ENCODE measurements at regions of chr1 and their contacts with region 1.

Region 1: GRCh38 chr1:32107742-32108661 is at the start of gene KPNA6:
- DNase-seq: peak; percentile 75 to 95 (median 93)
- ATAC-seq: peak; percentile 94
- H3K4me3 ChIP-seq: peak within 1 kb of the TSS; percentile 75
- H3K4me3 Mint-ChIP-seq: peak within 1 kb of the TSS; percentile 95 to 100 (median 99)
- H3K27ac ChIP-seq: peak within 1 kb of the TSS; percentile 94
- H3K27ac Mint-ChIP-seq: peak within 1 kb of the TSS; percentile 93 to 99 (median 98)
- H3K4me1 ChIP-seq: peaks cover 37 to 40% of the 10 kb centered on the region in 2 donors
- H3K4me1 Mint-ChIP-seq: peaks cover 27 to 63% (median 47%) of the 10 kb centered on the region in 7 donors
- H3K27me3 ChIP-seq: no peaks in the 10 kb centered on the region
- H3K27me3 Mint-ChIP-seq: no peaks in the 10 kb centered on the region
- total RNA-seq, gene KPNA6: 47.4 to 63.7 (median 51.6) TPM

Region 2: DNA sequence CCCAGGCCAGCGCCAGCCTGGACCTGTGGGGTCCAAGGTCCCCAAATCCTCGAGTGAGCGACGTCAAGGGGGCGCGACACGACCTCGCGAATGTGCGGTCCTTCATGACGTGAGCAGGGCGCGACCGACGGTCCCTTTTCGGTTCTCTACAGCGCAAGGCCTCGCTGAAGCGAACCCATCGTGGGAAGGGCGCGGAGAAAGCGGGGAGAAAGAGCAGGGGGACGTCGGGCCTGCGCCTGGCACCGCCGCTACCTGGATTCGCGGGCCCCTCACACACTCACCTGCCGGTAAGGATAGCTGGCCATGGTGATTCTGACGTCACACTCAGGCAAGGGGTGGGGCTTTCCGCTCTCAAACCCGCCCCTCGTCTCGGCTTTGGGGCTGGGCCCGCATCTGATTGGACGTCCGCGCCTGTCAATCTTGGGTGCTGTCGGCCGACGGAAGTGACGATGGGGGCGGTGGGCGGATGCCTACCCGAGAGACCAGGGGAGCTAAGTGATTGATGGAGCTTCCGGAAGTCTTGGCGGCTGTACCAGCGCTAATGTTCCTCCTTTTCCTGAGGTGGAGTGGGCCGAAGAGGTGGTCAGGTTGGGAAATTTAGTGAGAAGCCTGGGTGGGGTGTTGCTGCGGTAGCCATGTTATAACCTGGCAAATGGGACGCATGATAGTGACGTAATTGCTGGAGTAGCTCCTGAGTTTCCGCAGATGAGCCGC is 463.3 kb before region 1 on chr1 and contains the start of gene PEF1:
- CTCF ChIA-PET with region 1: no interaction called
- POLR2A ChIA-PET with region 1: interaction called, 5 read pairs
- intact Hi-C with region 1: loop called in 1 of 2 experiments (anchors 5 kb)
- DNase-seq: peak; percentile 97 to 100 (median 99)
- ATAC-seq: peak; percentile 94
- H3K4me3 ChIP-seq: peak within 1 kb of the TSS; percentile 91
- H3K4me3 Mint-ChIP-seq: peak within 1 kb of the TSS; percentile 92 to 100 (median 98)
- H3K27ac ChIP-seq: peak within 1 kb of the TSS; percentile 98
- H3K27ac Mint-ChIP-seq: peak within 1 kb of the TSS; percentile 98 to 100 (median 99)
- H3K4me1 ChIP-seq: peaks cover 27 to 30% of the 10 kb centered on the region in 2 donors
- H3K4me1 Mint-ChIP-seq: peaks cover 18 to 47% (median 40%) of the 10 kb centered on the region in 7 donors
- H3K27me3 ChIP-seq: no peaks in the 10 kb centered on the region
- H3K27me3 Mint-ChIP-seq: no peaks in the 10 kb centered on the region
- total RNA-seq, gene PEF1: 37.7 to 49.8 (median 40.8) TPM

Region 3: GRCh38 chr1:31705080-31705866 is 402.7 kb before region 1 on chr1:
- CTCF ChIA-PET with region 1: no interaction called
- POLR2A ChIA-PET with region 1: no interaction called
- intact Hi-C with region 1: no loop called
- DNase-seq: peak in 3 of 9 donors; percentile 13 to 80 (median 21)
- ATAC-seq: peak; percentile 70
- H3K4me3 ChIP-seq: no peak overlapping the region
- H3K4me3 Mint-ChIP-seq: peak overlapping the region in 6 of 10 donors; percentile 30 to 69 (median 57)
- H3K27ac ChIP-seq: no peak overlapping the region
- H3K27ac Mint-ChIP-seq: peak overlapping the region in 2 of 9 donors; percentile 58 to 67
- H3K4me1 ChIP-seq: peaks cover 8 to 12% of the 10 kb centered on the region in 2 donors
- H3K4me1 Mint-ChIP-seq: peaks cover 14 to 42% (median 28%) of the 10 kb centered on the region in 7 donors
- H3K27me3 ChIP-seq: peaks cover 0 to 12% of the 10 kb centered on the region in 2 donors
- H3K27me3 Mint-ChIP-seq: peaks cover 42 to 62% (median 45%) of the 10 kb centered on the region in 5 donors

Region 4: GRCh38 chr1:32122151-32122550 is 14.1 kb after region 1 on chr1:
- CTCF ChIA-PET with region 1: interaction called, 3 read pairs
- POLR2A ChIA-PET with region 1: interaction called, 13 read pairs
- intact Hi-C with region 1: loop called in 1 of 2 experiments (anchors 1 kb)
- DNase-seq: peak in 3 of 9 donors; percentile 18 to 41 (median 25)
- ATAC-seq: no peak
- H3K4me3 ChIP-seq: no peak overlapping the region
- H3K4me3 Mint-ChIP-seq: peak overlapping the region; percentile 16 to 86 (median 62)
- H3K27ac ChIP-seq: no peak overlapping the region
- H3K27ac Mint-ChIP-seq: peak overlapping the region; percentile 15 to 91 (median 81)
- H3K4me1 ChIP-seq: peaks cover 18 to 20% of the 10 kb centered on the region in 2 donors
- H3K4me1 Mint-ChIP-seq: peaks cover 28 to 71% (median 56%) of the 10 kb centered on the region in 7 donors
- H3K27me3 ChIP-seq: no peaks in the 10 kb centered on the region
- H3K27me3 Mint-ChIP-seq: no peaks in the 10 kb centered on the region

Region 5: DNA sequence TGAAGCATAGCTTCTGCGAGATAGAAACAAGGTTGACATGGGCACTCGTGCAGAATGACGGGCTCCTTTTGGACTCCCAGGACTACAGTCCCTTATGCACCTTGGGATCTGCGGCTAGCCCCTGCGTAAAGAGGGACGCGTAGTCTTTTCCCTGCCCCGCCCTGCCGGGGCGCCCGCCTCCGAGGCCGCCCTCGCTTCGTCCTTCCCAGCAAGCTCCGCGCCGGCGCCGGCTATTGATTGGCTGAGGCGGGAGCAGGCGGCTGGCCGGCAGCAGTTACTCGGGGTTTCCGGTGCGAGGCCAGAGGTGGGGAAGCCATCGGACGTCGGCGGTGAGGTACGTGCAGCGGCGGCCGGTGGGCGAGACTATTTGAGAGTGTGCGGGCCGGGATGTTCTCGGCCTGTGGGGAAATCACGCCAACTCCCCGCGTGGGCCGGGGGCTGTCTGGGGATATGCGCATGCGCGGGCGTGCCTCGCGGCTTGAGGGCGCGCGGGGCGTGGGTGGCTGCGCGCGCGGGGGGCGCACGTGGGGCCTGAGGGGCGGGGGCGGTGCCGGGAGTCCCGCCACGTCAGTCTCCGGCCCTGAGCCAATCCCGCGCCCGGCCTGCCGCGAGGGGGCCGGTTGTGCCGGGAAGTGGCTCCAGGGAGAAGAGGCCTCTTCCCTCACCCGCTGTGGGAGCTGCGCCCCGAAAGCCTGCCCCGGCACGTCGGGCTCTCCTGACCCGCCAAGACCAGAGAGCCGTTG is 71.6 kb after region 1 on chr1 and contains the start of gene TXLNA:
- CTCF ChIA-PET with region 1: no interaction called
- POLR2A ChIA-PET with region 1: interaction called, 7 read pairs
- intact Hi-C with region 1: loop called (anchors 1 to 5 kb)
- DNase-seq: peak; percentile 80 to 93 (median 86)
- ATAC-seq: peak; percentile 91
- H3K4me3 ChIP-seq: peak within 1 kb of the TSS; percentile 89
- H3K4me3 Mint-ChIP-seq: peak within 1 kb of the TSS; percentile 86 to 94 (median 91)
- H3K27ac ChIP-seq: peak within 1 kb of the TSS; percentile 89
- H3K27ac Mint-ChIP-seq: peak within 1 kb of the TSS; percentile 84 to 98 (median 92)
- H3K4me1 ChIP-seq: peaks cover 17 to 21% of the 10 kb centered on the region in 2 donors
- H3K4me1 Mint-ChIP-seq: peaks cover 22 to 45% (median 38%) of the 10 kb centered on the region in 7 donors
- H3K27me3 ChIP-seq: no peaks in the 10 kb centered on the region
- H3K27me3 Mint-ChIP-seq: no peaks in the 10 kb centered on the region
- total RNA-seq, gene TXLNA: 16.7 to 83.3 (median 36.3) TPM

Region 6: GRCh38 chr1:32200226-32201010 is 92.4 kb after region 1 on chr1 and contains the start of gene CCDC28B:
- CTCF ChIA-PET with region 1: no interaction called
- POLR2A ChIA-PET with region 1: interaction called, 5 read pairs
- intact Hi-C with region 1: loop called (anchors 1 kb)
- DNase-seq: peak; percentile 35 to 71 (median 62)
- ATAC-seq: peak; percentile 59
- H3K4me3 ChIP-seq: peak within 1 kb of the TSS; percentile 96
- H3K4me3 Mint-ChIP-seq: peak within 1 kb of the TSS; percentile 78 to 99 (median 94)
- H3K27ac ChIP-seq: peak within 1 kb of the TSS; percentile 99
- H3K27ac Mint-ChIP-seq: peak within 1 kb of the TSS; percentile 72 to 98 (median 91)
- H3K4me1 ChIP-seq: peaks cover 32 to 35% of the 10 kb centered on the region in 2 donors
- H3K4me1 Mint-ChIP-seq: peaks cover 41 to 73% (median 60%) of the 10 kb centered on the region in 7 donors
- H3K27me3 ChIP-seq: no peaks in the 10 kb centered on the region
- H3K27me3 Mint-ChIP-seq: no peaks in the 10 kb centered on the region
- total RNA-seq, gene CCDC28B: 6.2 to 39.0 (median 8.7) TPM

Measured in naive thymus-derived CD4-positive, alpha-beta T cell (primary cell).